GM18951 (cell line): ENCODE measurements at regions of chr1 and their contacts with region 1.

Region 1: DNA sequence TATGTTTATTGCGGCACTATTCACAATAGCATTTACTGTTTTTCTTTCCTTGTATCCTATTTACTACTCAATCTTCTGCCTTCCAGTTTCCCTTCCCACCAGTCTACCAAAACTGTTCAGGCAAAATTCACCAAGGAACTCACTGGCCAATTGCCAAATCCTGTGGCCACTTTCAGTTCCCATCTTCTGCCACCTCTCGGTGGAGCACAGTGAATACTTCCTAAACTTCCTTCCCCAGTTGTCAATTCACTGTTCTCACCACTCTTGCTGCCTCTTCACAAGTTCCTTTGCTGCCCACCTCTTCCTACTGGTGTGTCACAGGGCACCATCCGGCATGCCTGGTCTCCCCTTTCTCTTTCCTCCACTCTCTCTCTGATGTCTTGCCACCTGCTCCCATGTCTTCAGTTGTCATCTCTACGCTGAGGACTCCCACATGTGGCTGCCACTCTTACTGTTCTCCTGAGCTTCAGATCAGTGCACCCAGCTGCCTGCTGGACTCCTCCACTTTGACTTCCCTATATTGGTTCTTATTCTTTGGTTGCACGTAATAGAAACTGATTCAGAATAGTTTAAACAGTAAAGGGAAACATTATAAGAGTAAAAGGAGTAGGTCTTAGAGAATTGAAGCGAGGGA is 114.4 kb downstream of the PIK3R3 start:
- POLR2A ChIP-seq: no peak

Region 2: DNA sequence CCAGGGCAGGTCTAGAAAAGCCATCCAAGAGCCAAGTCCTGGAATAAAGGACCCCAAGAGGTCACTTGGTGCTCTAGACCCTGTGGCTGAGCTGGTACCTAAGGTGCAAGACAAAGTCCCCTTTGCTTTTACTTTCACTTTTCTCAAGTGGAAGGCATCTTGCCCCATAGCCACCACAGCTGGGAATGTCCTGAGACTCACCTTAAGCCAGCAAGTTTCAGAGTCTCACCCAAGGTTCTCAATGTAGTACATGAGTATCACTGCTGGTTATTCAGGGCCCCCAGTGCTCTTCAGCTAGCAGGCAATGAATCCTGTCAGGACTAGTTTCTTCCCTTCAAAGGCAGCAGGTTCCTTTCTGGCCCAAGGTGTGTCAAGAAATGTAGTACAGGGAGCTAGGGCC is 938.5 kb before region 1 on chr1:
- in situ Hi-C with region 1: loop called (anchors 10 kb)
- POLR2A ChIP-seq: no peak